ENCODE measurements at regions of chr6 and their contacts with region 1.

Region 1: GRCh38 chr6:139577763-139578604 is 203.5 kb upstream of the CITED2 start:
- DNase-seq: no peak
- H3K4me3 Mint-ChIP-seq: no peak overlapping the region
- H3K27ac Mint-ChIP-seq: no peak overlapping the region
- H3K4me1 Mint-ChIP-seq: peaks cover 17% of the 10 kb centered on the region
- H3K27me3 Mint-ChIP-seq: peaks cover 2% of the 10 kb centered on the region

Region 2: DNA sequence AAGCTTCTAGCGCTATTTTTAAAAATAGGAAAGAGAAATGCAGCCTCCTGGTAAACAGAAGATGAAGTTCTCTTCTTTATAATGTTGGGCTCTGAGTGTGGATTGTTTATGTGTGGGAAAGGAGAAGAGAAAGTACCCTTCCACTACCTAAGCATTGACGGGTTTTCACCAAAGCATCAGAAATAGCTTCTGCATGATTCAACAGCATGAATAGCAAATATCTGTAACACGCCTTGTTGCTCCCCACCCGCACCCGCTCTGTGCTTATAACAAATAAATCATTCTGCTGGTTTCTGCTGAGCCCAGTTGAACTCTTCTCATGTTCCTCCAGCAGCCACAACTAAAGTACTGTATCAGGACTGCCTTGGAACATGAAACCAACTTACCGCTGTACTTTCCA is 306.9 kb before region 1 on chr6:
- intact Hi-C with region 1: no loop called
- DNase-seq: no peak
- H3K4me3 Mint-ChIP-seq: no peak overlapping the region
- H3K27ac Mint-ChIP-seq: no peak overlapping the region
- H3K4me1 Mint-ChIP-seq: peaks cover 4% of the 10 kb centered on the region
- H3K27me3 Mint-ChIP-seq: no peaks in the 10 kb centered on the region

Region 3: GRCh38 chr6:139525415-139525814 is 52.6 kb before region 1 on chr6:
- intact Hi-C with region 1: loop called (anchors 5 kb)
- DNase-seq: no peak
- H3K4me3 Mint-ChIP-seq: no peak overlapping the region
- H3K27ac Mint-ChIP-seq: no peak overlapping the region
- H3K4me1 Mint-ChIP-seq: peaks cover 18% of the 10 kb centered on the region
- H3K27me3 Mint-ChIP-seq: no peaks in the 10 kb centered on the region

Region 4: DNA sequence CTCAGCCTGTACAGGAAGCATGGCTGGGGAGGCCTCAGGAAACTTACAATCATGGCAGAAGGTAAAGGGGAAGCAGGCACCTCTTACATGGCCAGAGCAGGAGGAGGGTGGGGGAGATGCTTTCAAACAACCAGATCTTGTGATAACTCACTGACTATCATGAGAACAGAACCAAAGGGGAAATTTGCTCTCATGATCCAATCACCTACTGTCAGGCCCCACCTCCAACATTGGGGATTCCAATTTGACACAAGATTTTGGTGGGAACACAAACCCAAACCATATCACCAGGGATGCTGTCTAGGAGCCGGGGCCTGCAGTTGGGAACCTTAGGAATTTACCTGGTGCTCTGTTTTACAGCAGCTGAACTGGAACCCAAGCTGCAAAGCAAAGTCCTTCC is 12.4 kb before region 1 on chr6:
- intact Hi-C with region 1: no loop called
- DNase-seq: no peak
- H3K4me3 Mint-ChIP-seq: no peak overlapping the region
- H3K27ac Mint-ChIP-seq: no peak overlapping the region
- H3K4me1 Mint-ChIP-seq: peaks cover 7% of the 10 kb centered on the region
- H3K27me3 Mint-ChIP-seq: no peaks in the 10 kb centered on the region